ENCODE measurements at regions of chr16 and their contacts with region 1.

Region 1: DNA sequence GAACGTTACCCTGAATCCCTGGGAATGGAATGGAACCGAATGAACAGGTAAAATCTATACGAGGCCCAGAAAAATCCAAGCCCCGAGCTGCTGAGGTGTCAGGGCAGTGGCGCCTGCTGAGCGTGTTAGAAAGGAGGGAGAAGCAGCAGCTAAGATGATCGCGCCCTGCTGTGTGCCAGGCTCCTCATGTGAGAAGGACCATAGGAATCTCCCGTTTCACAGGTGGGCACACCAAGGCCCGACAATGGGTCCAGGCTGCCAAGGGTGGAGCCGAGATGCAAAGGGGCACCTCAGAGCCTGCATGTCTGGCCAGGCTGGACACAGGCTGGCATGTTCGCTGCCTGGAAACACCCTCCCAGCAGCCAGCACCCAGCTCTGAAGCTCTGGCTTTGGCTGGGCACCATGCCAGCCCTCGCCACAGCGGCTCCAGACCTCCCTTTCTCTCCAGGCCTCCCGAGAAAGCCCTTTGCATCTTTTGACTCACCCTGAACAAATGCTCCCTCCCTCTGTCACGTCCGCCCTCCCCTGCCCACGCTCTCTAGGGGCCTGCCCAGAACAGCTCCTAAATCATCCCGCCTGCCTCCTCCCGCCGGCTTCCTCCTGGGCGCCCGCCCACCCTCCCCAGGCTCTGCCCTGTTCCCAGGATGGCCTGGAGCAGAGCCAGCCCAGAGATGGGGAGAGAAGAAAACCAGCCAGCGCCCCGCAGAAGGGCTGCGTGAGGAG is 217.8 kb upstream of the GSE1 start:
- H3K4me3 ChIP-seq: no peak overlapping the region
- H3K27ac ChIP-seq: no peak overlapping the region
- H3K4me1 ChIP-seq: peaks cover 16% of the 10 kb centered on the region
- CTCF ChIP-seq: no peak

Region 2: GRCh38 chr16:85369741-85370528 is 25.4 kb before region 1 on chr16:
- CTCF ChIA-PET with region 1: interaction called, 17 read pairs
- POLR2A ChIA-PET with region 1: no interaction called
- H3K4me3 ChIP-seq: no peak overlapping the region
- H3K27ac ChIP-seq: no peak overlapping the region
- H3K4me1 ChIP-seq: no peaks in the 10 kb centered on the region
- CTCF ChIP-seq: peak; percentile 72

Measured in HEK293 (cell line).